ENCODE measurements at regions of chr3 and their contacts with region 1.

Region 1: DNA sequence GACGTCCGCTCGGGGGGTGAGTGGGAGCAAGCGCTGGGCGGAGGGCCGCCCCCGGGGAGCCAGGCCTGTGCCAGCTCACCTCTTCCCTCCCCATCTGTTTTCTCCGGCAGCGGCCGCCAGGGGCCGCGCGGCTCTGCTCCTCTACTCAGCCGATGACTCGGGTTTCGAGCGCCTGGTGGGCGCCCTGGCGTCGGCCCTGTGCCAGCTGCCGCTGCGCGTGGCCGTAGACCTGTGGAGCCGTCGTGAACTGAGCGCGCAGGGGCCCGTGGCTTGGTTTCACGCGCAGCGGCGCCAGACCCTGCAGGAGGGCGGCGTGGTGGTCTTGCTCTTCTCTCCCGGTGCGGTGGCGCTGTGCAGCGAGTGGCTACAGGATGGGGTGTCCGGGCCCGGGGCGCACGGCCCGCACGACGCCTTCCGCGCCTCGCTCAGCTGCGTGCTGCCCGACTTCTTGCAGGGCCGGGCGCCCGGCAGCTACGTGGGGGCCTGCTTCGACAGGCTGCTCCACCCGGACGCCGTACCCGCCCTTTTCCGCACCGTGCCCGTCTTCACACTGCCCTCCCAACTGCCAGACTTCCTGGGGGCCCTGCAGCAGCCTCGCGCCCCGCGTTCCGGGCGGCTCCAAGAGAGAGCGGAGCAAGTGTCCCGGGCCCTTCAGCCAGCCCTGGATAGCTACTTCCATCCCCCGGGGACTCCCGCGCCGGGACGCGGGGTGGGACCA is 632 bp upstream of the CRELD1 start:
- DNase-seq: peak; percentile 92
- H3K4me3 ChIP-seq: peak overlapping the region; percentile 75 to 83
- H3K27ac ChIP-seq: peak overlapping the region; percentile 88 to 91
- H3K4me1 ChIP-seq: peaks cover 12 to 19% of the 10 kb centered on the region in 2 experiments
- H3K27me3 ChIP-seq: no peaks in the 10 kb centered on the region
- CTCF ChIP-seq: peak; percentile 72
- EP300 ChIP-seq: no peak
- RAD21 ChIP-seq: peak; percentile 65

Region 2: GRCh38 chr3:9843715-9844438 is 89.1 kb before region 1 on chr3 and contains the start of gene RPUSD3:
- CTCF ChIA-PET with region 1: interaction called, 10 read pairs
- POLR2A ChIA-PET with region 1: interaction called, 4 read pairs
- DNase-seq: peak; percentile 100
- H3K4me3 ChIP-seq: peak within 1 kb of the TSS; percentile 74 to 88
- H3K27ac ChIP-seq: peak within 1 kb of the TSS; percentile 58 to 74
- H3K4me1 ChIP-seq: peaks cover 5% of the 10 kb centered on the region in 2 experiments; a peak in 2 of 4 replicates
- H3K27me3 ChIP-seq: no peaks in the 10 kb centered on the region
- CTCF ChIP-seq: no peak
- EP300 ChIP-seq: no peak
- RAD21 ChIP-seq: no peak
- polyA plus RNA-seq, gene RPUSD3: 43.4 and 48.0 TPM in 2 replicates

Region 3: DNA sequence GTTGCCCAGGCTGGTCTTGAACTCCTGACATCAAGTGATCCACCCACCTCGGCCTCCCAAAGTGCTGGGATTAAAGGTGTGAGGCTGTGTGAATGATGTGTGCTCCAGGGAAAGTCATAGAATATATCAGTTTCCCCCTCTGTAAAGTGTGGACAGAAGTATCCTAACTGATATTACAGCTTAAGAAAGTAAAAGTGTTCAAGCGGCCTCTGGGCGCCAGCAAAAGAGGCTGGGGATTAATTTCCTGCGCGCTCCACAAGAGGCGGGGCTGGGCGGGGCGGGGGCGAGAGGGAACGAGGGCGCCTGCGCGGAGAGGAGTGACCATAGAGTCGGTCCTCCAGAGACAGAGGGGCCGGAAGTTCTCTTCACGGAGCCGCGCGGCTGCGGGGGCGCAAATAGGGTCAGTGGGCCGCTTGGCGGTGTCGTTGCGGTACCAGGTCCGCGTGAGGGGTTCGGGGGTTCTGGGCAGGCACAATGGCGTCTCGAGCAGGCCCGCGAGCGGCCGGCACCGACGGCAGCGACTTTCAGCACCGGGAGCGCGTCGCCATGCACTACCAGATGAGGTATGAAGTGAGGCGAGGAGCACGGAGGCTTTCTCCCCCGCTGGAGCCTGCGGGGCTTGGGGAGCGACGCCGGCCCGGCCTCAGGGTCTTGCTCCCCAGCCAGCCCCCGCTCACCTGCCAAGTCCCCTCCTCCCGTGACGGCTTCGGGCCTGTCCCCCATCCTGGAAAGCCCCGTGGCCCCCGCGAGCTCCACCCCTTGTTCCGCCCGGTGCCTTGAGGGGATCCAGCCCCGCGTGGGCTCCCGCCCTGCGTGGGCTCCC is 42.5 kb before region 1 on chr3 and contains the start of gene JAGN1:
- CTCF ChIA-PET with region 1: interaction called, 3 read pairs
- POLR2A ChIA-PET with region 1: interaction called, 11 read pairs
- DNase-seq: peak; percentile 97
- H3K4me3 ChIP-seq: peak within 1 kb of the TSS; percentile 81 to 84
- H3K27ac ChIP-seq: peak within 1 kb of the TSS; percentile 78 to 90
- H3K4me1 ChIP-seq: peaks cover 3 to 9% of the 10 kb centered on the region in 2 experiments; a peak in 2 of 4 replicates
- H3K27me3 ChIP-seq: no peaks in the 10 kb centered on the region
- CTCF ChIP-seq: no peak
- EP300 ChIP-seq: peak in 1 of 2 experiments; percentile 15; a peak in 1 of 4 replicates
- RAD21 ChIP-seq: no peak
- polyA plus RNA-seq, gene JAGN1: 40.9 and 41.6 TPM in 2 replicates

Region 4: GRCh38 chr3:9915254-9916141 is 17.5 kb before region 1 on chr3:
- CTCF ChIA-PET with region 1: interaction called, 33 read pairs
- POLR2A ChIA-PET with region 1: interaction called, 5 read pairs
- DNase-seq: peak; percentile 81
- H3K4me3 ChIP-seq: peak overlapping the region; percentile 43 to 47
- H3K27ac ChIP-seq: peak overlapping the region in 1 of 2 experiments; percentile 60; a peak in 2 of 4 replicates
- H3K4me1 ChIP-seq: peaks cover 6 to 44% of the 10 kb centered on the region in 2 experiments; a peak in 3 of 4 replicates
- H3K27me3 ChIP-seq: no peaks in the 10 kb centered on the region
- CTCF ChIP-seq: no peak
- EP300 ChIP-seq: no peak
- RAD21 ChIP-seq: no peak

Region 5: DNA sequence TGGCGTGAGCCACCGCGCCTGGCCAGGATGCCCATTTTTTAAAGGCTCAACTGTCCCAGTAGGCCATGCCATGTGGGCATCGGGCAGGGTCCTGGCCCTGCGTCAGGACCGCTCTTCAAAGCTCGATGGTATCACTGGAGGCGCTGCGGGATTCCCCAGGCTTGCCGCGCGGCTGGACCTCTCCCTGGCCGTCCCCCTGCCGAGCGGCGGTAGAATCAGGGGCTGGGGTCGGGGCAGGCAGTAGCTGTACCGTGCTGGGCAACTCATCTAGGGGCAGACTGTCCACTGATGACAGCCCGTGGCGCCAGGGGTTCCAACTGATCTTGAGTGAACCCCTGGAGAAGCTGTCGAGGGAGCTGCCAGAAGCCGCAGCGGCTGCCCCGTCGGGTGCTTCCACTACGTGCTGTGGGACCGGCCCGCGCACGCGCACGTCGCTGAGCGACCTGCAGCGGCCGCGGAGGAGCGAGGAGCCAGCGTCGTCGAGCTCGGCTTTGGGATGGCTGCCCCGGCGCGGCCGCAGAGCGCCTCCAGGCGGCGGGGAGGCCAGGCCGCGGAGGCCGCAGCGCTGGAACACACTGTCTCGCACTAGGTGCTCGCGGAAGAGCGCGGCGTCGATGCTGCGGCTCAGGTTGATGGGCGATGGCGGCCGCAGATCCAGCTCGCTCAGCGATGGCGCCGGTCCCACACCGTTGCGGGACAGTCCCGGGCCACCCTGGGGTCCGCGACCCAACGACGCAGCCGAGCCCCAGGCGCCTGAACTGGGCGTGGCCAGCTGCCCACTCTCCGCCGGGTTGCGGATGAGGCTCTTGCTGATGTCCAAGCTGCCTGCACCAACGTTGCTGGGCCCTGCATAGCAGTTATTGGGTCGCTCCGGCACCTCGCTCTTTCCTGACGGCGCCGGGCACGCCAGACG is 13.4 kb after region 1 on chr3:
- CTCF ChIA-PET with region 1: interaction called, 38 read pairs
- POLR2A ChIA-PET with region 1: interaction called, 58 read pairs
- DNase-seq: peak; percentile 89
- H3K4me3 ChIP-seq: peak overlapping the region; percentile 41; a peak in 3 of 4 replicates
- H3K27ac ChIP-seq: peak overlapping the region in 1 of 2 experiments; percentile 43; a peak in 1 of 4 replicates
- H3K4me1 ChIP-seq: peaks cover 0 to 7% of the 10 kb centered on the region in 2 experiments; a peak in 1 of 4 replicates
- H3K27me3 ChIP-seq: no peaks in the 10 kb centered on the region
- CTCF ChIP-seq: peak; percentile 52
- EP300 ChIP-seq: no peak
- RAD21 ChIP-seq: peak; percentile 48

Region 6: DNA sequence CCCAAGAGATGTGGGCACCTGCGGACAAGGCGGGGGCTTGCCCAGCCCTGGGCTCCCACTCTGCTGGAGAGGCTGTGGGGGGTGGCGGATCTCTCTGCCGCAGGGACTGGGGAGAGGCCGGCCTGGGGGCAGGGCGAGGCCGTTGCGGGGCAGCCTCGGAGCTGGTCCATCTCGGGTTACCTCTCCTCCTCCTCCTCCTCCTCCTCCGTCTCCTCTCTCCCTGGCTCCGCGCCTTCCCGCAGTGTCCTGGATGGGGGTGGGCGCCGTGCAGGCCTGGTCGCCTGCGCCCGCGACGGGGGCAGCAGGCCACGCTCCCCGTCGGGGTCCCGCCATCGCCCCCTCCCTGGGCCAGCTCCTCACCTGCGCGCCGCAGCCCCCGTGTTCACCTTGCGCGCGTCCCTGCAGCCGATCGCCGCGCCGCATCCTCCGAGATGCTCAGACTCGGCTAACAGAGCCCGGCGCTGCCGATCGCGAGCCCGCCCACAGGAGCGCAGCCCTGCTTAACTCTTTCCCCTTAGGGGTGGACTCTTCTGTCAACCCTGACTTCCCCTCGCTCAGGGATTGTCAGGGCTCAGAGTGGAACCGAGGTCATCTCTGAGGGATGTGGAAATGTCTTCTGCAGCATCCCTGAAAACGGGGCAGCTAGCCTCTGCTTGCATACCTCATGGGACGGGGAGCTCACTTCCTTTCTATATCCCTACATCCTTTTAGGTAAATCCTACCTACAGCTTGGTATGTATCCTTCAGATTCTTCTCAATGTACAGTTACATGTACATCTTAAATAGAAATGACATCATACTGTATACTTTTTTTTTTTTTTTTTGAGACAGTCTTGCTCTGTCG is 19.2 kb after region 1 on chr3 and contains the start of gene PRRT3:
- CTCF ChIA-PET with region 1: interaction called, 38 read pairs
- POLR2A ChIA-PET with region 1: interaction called, 58 read pairs
- DNase-seq: peak; percentile 86
- H3K4me3 ChIP-seq: peak within 1 kb of the TSS; percentile 79 to 86
- H3K27ac ChIP-seq: no peak within 1 kb of the TSS; a peak in 1 of 4 replicates
- H3K4me1 ChIP-seq: peaks cover 13 to 19% of the 10 kb centered on the region in 2 experiments; a peak in 3 of 4 replicates
- H3K27me3 ChIP-seq: no peaks in the 10 kb centered on the region
- CTCF ChIP-seq: no peak
- EP300 ChIP-seq: no peak; a peak in 1 of 4 replicates
- RAD21 ChIP-seq: no peak
- polyA plus RNA-seq, gene PRRT3: 3.9 and 5.5 TPM in 2 replicates

Region 7: GRCh38 chr3:10263646-10264363 is 330.8 kb after region 1 on chr3:
- CTCF ChIA-PET with region 1: no interaction called
- POLR2A ChIA-PET with region 1: no interaction called
- DNase-seq: peak; percentile 75
- H3K4me3 ChIP-seq: no peak overlapping the region
- H3K27ac ChIP-seq: peak overlapping the region; percentile 6 to 15; a peak in 2 of 4 replicates
- H3K4me1 ChIP-seq: peaks cover 0 to 2% of the 10 kb centered on the region in 2 experiments; a peak in 1 of 4 replicates
- H3K27me3 ChIP-seq: no peaks in the 10 kb centered on the region
- CTCF ChIP-seq: peak; percentile 55
- EP300 ChIP-seq: no peak
- RAD21 ChIP-seq: no peak; the same call in 1 of the 2 replicates

Measured in SK-N-SH (cell line).